Activated naive CD4-positive, alpha-beta T cell treated with anti-CD3 and anti-CD28 coated beads, Interleukin-2, amount 10 ng/mL, durations not matched to agents 7 days and 5 days (primary cell): ENCODE measurements at regions of chr12 and their contacts with region 1.

Region 1: GRCh38 chr12:110449799-110450497 is at the start of gene ARPC3:
- DNase-seq: peak; percentile 98
- H3K4me3 Mint-ChIP-seq: peak within 1 kb of the TSS; percentile 99
- H3K27ac Mint-ChIP-seq: peak within 1 kb of the TSS; percentile 99
- H3K4me1 Mint-ChIP-seq: peaks cover 51% of the 10 kb centered on the region
- H3K27me3 Mint-ChIP-seq: no peaks in the 10 kb centered on the region

Region 2: DNA sequence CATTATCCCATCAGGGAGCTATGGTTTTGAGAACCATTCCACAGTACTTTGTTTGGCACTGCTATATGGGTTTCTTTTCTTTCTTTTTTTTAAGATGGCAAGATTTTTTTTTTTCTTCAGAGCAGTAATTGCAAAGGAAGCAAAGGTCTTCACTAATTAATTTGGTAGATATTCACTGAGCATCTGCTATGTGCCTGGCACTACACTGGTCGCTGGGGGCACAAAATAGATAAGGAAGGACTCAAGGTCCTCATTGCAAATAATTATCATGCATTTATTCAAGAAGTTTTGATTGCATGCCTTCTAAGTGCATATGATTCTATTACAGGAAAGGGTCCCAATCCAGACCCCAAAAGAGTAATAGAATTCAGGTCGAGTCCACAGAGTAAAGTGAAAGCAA is 178.9 kb before region 1 on chr12:
- CTCF ChIA-PET with region 1: no interaction called
- DNase-seq: no peak
- H3K4me3 Mint-ChIP-seq: no peak overlapping the region
- H3K27ac Mint-ChIP-seq: no peak overlapping the region
- H3K4me1 Mint-ChIP-seq: no peaks in the 10 kb centered on the region
- H3K27me3 Mint-ChIP-seq: peaks cover 65% of the 10 kb centered on the region

Region 3: DNA sequence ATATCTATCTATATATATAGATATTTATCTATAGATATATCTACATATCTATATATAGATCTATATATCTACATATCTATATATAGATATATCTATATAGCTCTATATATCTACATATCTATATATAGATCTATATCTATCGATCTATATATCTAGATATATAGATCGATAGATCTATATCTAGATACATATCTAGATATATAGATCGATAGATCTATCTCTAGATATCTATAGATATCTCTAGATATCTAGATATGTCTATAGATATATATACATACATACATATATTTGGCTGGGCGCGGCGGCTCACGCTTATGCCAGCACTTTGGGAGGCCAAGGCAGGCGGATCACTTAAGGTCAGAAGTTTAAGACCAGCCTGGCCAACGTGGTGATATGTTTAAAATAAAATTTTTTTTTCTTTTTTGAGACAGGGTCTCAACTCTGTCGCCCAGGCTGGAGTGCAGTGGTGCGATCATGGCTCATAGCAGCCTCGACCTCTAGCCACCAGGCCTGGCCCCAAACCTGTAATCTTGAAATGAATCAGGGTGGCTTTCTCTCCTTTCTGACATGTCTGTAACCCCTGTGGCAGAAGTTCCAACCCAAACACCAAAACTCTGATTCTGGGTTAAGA is 17.9 kb before region 1 on chr12:
- CTCF ChIA-PET with region 1: interaction called, 11 read pairs
- DNase-seq: no peak
- H3K4me3 Mint-ChIP-seq: no peak overlapping the region
- H3K27ac Mint-ChIP-seq: peak overlapping the region; percentile 78
- H3K4me1 Mint-ChIP-seq: peaks cover 5% of the 10 kb centered on the region
- H3K27me3 Mint-ChIP-seq: peaks cover 6% of the 10 kb centered on the region

Region 4: GRCh38 chr12:110606253-110606611 is 156.3 kb after region 1 on chr12:
- CTCF ChIA-PET with region 1: interaction called, 50 read pairs
- DNase-seq: no peak
- H3K4me3 Mint-ChIP-seq: peak overlapping the region; percentile 61
- H3K27ac Mint-ChIP-seq: peak overlapping the region; percentile 76
- H3K4me1 Mint-ChIP-seq: peaks cover 26% of the 10 kb centered on the region
- H3K27me3 Mint-ChIP-seq: peaks cover 7% of the 10 kb centered on the region

Region 5: DNA sequence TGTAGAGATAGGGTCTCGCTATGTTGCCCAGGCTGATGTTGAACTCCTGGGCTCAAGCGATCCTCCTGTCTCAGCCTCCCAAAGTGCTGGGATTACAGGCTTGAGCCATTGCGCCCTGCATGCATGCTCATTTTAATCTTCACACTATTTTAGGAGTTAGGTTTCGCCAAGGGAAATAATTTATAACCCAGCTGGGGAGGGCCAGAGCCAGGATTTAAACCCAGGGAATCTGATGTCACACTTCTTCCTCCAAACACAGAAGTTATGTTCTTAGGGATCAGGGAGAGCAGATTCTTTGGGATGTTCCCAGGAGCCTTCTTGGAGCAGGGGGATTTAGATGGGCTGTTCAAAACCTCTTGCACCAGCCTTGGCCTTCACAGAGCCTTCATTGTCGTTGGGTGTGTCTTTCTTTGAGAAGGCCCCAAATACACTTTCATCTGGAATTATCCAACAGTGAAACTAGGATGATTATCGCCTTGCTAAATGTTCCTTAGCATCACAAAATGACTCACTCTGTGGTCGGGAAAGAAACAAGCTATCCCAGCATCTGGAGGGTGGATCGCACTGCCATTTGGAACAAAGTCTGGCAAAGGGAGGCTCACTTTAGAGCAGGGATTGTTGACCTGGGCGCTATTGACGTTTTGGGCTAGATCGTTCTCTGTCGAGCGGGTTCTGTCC is 301.0 kb after region 1 on chr12:
- CTCF ChIA-PET with region 1: no interaction called
- DNase-seq: no peak
- H3K4me3 Mint-ChIP-seq: no peak overlapping the region
- H3K27ac Mint-ChIP-seq: no peak overlapping the region
- H3K4me1 Mint-ChIP-seq: no peaks in the 10 kb centered on the region
- H3K27me3 Mint-ChIP-seq: peaks cover 5% of the 10 kb centered on the region